ENCODE measurements at regions of chr4 and their contacts with region 1.

Region 1: GRCh38 chr4:140049024-140049848 is 104.7 kb downstream of the MAML3 start:
- DNase-seq: peak; percentile 43 to 87 (median 60)
- H3K4me3 ChIP-seq: peak overlapping the region in 2 of 4 donors; percentile 45 to 58
- H3K27ac ChIP-seq: peak overlapping the region in 4 of 5 donors; percentile 12 to 74 (median 59)
- H3K4me1 ChIP-seq: peaks cover 4 to 28% of the 10 kb centered on the region in 2 donors
- H3K27me3 ChIP-seq: no peaks in the 10 kb centered on the region
- CTCF ChIP-seq: peak in 3 of 6 experiments; percentile 7 to 22 (median 17)
- POLR2A ChIP-seq: peak in 1 of 2 donors; percentile 44

Region 2: DNA sequence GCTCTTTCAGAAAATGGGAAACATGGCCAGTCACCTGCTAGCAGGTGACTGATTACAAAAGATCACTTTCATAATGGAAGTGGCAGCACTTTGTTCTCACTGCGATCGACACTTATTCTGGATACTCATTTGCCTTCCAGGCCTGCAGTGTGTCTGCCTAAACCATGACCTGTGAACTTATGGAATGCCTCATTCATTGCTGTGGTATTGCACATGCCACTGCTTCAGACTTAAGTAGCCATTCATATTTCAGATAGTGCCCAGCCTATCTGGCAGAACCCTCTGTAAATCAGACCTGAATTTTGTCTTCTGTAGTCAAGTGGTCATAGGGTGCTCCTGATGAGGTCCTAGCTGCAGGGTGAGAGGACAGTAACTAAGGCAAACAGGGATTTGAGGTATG is 406.9 kb before region 1 on chr4:
- intact Hi-C with region 1: no loop called
- DNase-seq: no peak
- H3K4me3 ChIP-seq: no peak overlapping the region
- H3K27ac ChIP-seq: no peak overlapping the region
- H3K4me1 ChIP-seq: no peaks in the 10 kb centered on the region
- H3K27me3 ChIP-seq: no peaks in the 10 kb centered on the region
- CTCF ChIP-seq: no peak
- POLR2A ChIP-seq: no peak

Region 3: GRCh38 chr4:139740531-139741041 is 308.6 kb before region 1 on chr4:
- intact Hi-C with region 1: loop called in 1 of 2 experiments (anchors 10 kb)
- DNase-seq: peak; percentile 73 to 93 (median 84)
- H3K4me3 ChIP-seq: no peak overlapping the region
- H3K27ac ChIP-seq: peak overlapping the region; percentile 50 to 94 (median 85)
- H3K4me1 ChIP-seq: peaks cover 21 to 54% of the 10 kb centered on the region in 2 donors
- H3K27me3 ChIP-seq: no peaks in the 10 kb centered on the region
- CTCF ChIP-seq: peak in 5 of 6 experiments; percentile 22 to 49 (median 41)
- POLR2A ChIP-seq: no peak

Region 4: GRCh38 chr4:140095694-140096482 is 46.7 kb after region 1 on chr4:
- intact Hi-C with region 1: no loop called
- DNase-seq: peak; percentile 46 to 84 (median 74)
- H3K4me3 ChIP-seq: peak overlapping the region in 1 of 4 donors; percentile 4
- H3K27ac ChIP-seq: peak overlapping the region; percentile 58 to 96 (median 82)
- H3K4me1 ChIP-seq: peaks cover 28 to 95% of the 10 kb centered on the region in 2 donors
- H3K27me3 ChIP-seq: no peaks in the 10 kb centered on the region
- CTCF ChIP-seq: no peak
- POLR2A ChIP-seq: peak in 1 of 2 donors; percentile 23

Region 5: DNA sequence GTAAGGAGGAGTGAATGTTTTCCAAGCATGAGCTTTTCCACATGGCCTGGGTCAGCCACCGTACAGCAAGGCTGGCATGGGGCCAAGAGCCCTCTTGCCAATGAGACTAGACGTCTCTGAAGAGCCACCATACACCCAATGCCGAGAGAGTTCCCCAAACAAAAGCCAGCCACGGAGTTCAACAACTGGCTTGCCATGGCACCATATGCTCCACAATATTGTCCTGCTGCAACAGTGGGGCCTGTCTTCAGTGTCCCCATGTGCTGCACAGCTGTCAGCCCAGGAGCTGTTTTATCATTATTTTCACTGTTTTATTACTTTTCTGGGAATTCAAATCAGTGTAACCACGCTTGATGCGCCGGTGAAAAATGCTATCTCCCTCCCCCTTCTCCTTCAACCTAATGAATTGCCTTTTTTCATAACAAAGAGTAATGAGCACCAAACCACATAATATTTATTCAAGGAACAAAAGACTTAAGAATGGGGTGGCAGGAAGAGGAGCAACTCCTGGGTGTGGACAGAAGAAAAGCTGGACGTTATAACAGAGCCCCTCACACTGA is 86.4 kb after region 1 on chr4:
- intact Hi-C with region 1: loop called in 1 of 2 experiments (anchors 10 kb)
- DNase-seq: peak; percentile 20 to 90 (median 44)
- H3K4me3 ChIP-seq: no peak overlapping the region
- H3K27ac ChIP-seq: peak overlapping the region in 1 of 5 donors; percentile 1
- H3K4me1 ChIP-seq: peaks cover 0 to 4% of the 10 kb centered on the region in 2 donors
- H3K27me3 ChIP-seq: no peaks in the 10 kb centered on the region
- CTCF ChIP-seq: no peak
- POLR2A ChIP-seq: no peak

Region 6: DNA sequence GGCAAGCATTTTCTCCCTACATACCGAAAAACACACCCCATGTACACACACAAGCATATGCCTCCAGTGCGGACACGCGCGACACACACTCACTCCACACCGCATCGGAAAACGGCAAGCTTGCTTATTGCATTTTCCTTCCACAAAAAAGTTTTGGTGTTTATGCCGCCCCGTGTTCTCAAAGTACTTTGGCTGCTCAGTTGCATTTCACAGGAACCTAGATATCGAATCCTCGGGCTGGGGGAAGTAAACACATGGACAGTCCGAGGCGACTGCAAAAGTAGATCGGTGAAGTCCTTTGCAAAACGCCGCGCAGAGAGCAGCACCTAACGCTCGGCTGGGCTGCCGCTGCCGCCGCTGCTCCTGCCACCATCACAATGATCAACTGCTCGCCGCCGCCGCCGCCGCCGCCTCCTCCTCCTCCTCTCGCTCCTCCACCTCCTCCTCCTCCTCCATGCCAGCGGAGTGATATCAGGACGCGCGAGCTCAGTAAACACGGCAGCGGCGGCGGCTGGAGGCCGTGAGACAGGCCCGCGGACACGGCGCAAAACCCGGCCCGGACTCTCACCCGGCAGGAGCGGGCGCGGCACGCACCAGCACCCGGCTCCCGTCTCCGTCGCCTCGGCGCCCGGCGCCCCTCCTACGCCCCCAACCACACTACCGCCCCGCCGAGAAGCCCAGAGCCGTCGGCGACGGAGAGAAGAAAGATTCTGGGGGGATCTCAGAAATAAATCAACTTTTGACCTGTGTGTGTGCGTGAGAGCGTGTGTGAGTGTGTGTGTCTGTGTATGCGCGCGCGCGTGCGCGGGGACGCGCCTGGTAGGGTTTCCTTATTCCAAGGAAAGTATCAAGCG is 104.7 kb after region 1 on chr4 and contains the start of gene MAML3:
- intact Hi-C with region 1: loop called in 1 of 2 experiments (anchors 5 kb)
- DNase-seq: peak; percentile 95 to 98 (median 96)
- H3K4me3 ChIP-seq: peak within 1 kb of the TSS; percentile 80 to 93 (median 88)
- H3K27ac ChIP-seq: peak within 1 kb of the TSS; percentile 95 to 99 (median 98)
- H3K4me1 ChIP-seq: peaks cover 0 to 14% of the 10 kb centered on the region in 2 donors
- H3K27me3 ChIP-seq: no peaks in the 10 kb centered on the region
- CTCF ChIP-seq: peak in 2 of 6 experiments; percentile 7 to 47
- POLR2A ChIP-seq: peak; percentile 90 to 96
- total RNA-seq, gene MAML3: 3.4 to 15.9 (median 9.5) TPM

Region 7: GRCh38 chr4:140252742-140253555 is 203.7 kb after region 1 on chr4:
- intact Hi-C with region 1: loop called in 1 of 2 experiments (anchors 10 kb)
- DNase-seq: peak; percentile 77 to 88 (median 79)
- H3K4me3 ChIP-seq: peak overlapping the region in 2 of 4 donors; percentile 54 to 66
- H3K27ac ChIP-seq: peak overlapping the region; percentile 53 to 95 (median 92)
- H3K4me1 ChIP-seq: peaks cover 5 to 29% of the 10 kb centered on the region in 2 donors
- H3K27me3 ChIP-seq: no peaks in the 10 kb centered on the region
- CTCF ChIP-seq: peak; percentile 65 to 97 (median 80)
- POLR2A ChIP-seq: peak in 1 of 2 donors; percentile 48

Region 8: GRCh38 chr4:140326395-140326993 is 277.3 kb after region 1 on chr4:
- intact Hi-C with region 1: loop called in 1 of 2 experiments (anchors 10 kb)
- DNase-seq: peak; percentile 22 to 76 (median 37)
- H3K4me3 ChIP-seq: no peak overlapping the region
- H3K27ac ChIP-seq: no peak overlapping the region
- H3K4me1 ChIP-seq: no peaks in the 10 kb centered on the region
- H3K27me3 ChIP-seq: no peaks in the 10 kb centered on the region
- CTCF ChIP-seq: peak; percentile 37 to 72 (median 60)
- POLR2A ChIP-seq: no peak

Measured in adrenal gland (tissue), 19 donors.